ENCODE measurements at regions of chr10 and their contacts with region 1.

Region 1: GRCh38 chr10:114103284-114103683 is 59.6 kb downstream of the ADRB1 start:
- DNase-seq: peak; percentile 90
- H3K4me3 ChIP-seq: no peak overlapping the region
- H3K27ac ChIP-seq: no peak overlapping the region
- H3K4me1 ChIP-seq: peaks cover 26% of the 10 kb centered on the region
- H3K27me3 ChIP-seq: no peaks in the 10 kb centered on the region
- CTCF ChIP-seq: peak; percentile 64

Region 2: DNA sequence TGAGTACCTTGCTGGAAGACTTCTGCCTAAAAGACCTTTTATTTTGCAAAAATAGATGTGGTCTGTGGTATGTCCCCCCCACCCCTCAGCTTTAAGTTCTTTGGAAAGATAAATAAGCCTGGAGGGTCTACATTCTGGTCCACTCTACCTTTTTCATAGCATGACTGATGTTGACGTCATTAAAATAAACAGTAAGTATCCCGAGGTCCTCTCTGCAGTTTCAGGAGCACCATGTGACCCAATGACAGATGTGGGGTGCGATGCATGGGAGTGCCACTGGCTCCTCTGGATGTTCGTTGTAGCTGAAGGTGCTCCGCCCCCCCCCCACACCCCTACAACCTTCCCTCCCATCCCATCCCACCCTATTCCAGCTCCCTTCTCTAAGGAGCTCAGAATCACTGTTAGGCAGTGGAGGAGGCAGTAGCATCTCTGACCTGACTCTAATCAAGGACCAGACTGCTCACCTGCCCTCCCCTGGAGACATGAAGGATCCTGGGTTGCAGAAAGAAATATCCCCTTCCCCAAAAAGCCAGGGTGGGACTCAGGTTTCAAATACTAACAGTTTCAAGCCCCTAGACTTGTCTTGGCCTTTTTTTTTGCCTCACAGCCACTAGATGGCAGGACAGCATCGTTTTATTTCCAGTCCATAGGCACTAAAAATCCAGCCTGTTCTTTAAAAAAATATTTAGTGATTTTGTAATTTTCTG is 398.5 kb before region 1 on chr10:
- CTCF ChIA-PET with region 1: interaction called, 7 read pairs
- POLR2A ChIA-PET with region 1: no interaction called
- intact Hi-C with region 1: loop called (anchors 1 kb)
- DNase-seq: peak; percentile 80
- H3K4me3 ChIP-seq: no peak overlapping the region
- H3K27ac ChIP-seq: peak overlapping the region; percentile 72
- H3K4me1 ChIP-seq: peaks cover 53% of the 10 kb centered on the region
- H3K27me3 ChIP-seq: no peaks in the 10 kb centered on the region
- CTCF ChIP-seq: peak; percentile 83

Region 3: DNA sequence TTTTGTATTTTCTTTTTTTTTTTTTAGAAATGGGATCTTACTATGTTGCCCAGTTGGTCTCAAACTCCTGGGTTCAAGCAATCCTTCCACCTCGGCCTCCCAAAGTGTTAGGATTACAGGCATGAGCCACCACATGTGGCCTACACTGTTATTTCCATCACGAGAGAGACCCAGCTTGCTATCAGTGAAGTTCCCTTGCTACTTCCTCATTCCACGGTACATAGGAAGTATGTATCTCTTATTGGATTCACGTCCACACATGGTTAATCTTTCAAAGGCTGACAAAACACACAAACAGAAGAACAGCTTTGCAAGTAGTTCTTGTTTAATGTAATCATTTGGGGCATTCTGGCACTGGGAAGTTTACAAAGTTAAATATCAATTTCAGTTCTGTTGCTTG is 300.3 kb before region 1 on chr10:
- CTCF ChIA-PET with region 1: interaction called, 15 read pairs
- POLR2A ChIA-PET with region 1: no interaction called
- intact Hi-C with region 1: loop called (anchors 2 kb)
- DNase-seq: no peak
- H3K4me3 ChIP-seq: no peak overlapping the region
- H3K27ac ChIP-seq: no peak overlapping the region
- H3K4me1 ChIP-seq: peaks cover 35% of the 10 kb centered on the region
- H3K27me3 ChIP-seq: no peaks in the 10 kb centered on the region
- CTCF ChIP-seq: no peak

Region 4: DNA sequence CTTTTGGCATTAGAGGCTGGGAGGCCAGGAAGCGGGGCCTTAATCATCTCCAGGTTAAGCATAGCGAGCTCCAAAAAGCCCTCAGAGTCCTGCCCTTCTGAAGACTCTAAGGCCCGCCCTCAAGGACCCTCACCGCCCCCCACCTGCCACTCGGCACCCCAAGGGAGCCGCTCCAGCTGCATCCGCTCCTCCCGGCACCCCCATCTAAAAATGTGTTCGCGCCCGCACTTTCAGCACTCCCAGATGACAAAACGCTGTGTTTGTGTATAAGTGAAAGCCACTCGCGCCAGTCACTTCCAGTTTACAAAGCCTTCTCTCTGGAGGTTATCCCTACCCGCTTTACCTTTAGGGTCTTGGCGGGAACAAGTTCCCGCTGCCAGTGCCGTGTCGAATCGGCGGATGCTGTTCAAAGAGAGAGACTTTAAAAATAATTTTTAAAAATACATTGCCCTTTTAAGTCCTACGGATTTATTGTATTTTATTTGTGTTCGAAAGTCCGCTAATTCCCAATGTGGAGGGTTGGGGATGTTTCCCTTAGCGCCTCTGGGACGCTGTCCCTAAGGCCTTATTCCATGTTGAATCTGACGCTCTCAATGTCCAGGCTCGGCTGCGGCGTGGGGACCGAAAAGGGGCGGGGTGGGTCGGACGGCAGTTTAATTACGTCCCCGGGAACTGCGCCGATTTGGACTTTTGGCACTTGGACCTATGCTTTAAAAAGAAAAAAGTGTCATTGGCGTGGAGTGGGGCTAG is 249.1 kb before region 1 on chr10 and contains the starts of genes DCLRE1A and NHLRC2:
- CTCF ChIA-PET with region 1: no interaction called
- POLR2A ChIA-PET with region 1: interaction called, 3 read pairs
- intact Hi-C with region 1: loop called (anchors 2 kb)
- DNase-seq: peak; percentile 90
- H3K4me3 ChIP-seq: peak within 1 kb of the TSS; percentile 76
- H3K27ac ChIP-seq: peak within 1 kb of the TSS; percentile 99
- H3K4me1 ChIP-seq: peaks cover 27% of the 10 kb centered on the region
- H3K27me3 ChIP-seq: no peaks in the 10 kb centered on the region
- CTCF ChIP-seq: no peak
- total RNA-seq, gene DCLRE1A: 62.4 and 75.6 TPM in 2 replicates
- total RNA-seq, gene NHLRC2: 49.7 and 61.9 TPM in 2 replicates

Region 5: GRCh38 chr10:113987805-113988204 is 115.5 kb before region 1 on chr10:
- CTCF ChIA-PET with region 1: no interaction called
- POLR2A ChIA-PET with region 1: interaction called, 10 read pairs
- intact Hi-C with region 1: loop called (anchors 2 kb)
- DNase-seq: no peak
- H3K4me3 ChIP-seq: no peak overlapping the region
- H3K27ac ChIP-seq: peak overlapping the region; percentile 96
- H3K4me1 ChIP-seq: peaks cover 43% of the 10 kb centered on the region
- H3K27me3 ChIP-seq: no peaks in the 10 kb centered on the region
- CTCF ChIP-seq: no peak

Region 6: GRCh38 chr10:114520453-114520852 is 417.2 kb after region 1 on chr10:
- CTCF ChIA-PET with region 1: no interaction called
- POLR2A ChIA-PET with region 1: no interaction called
- intact Hi-C with region 1: no loop called
- DNase-seq: peak; percentile 16
- H3K4me3 ChIP-seq: no peak overlapping the region
- H3K27ac ChIP-seq: no peak overlapping the region
- H3K4me1 ChIP-seq: peaks cover 14% of the 10 kb centered on the region
- H3K27me3 ChIP-seq: no peaks in the 10 kb centered on the region
- CTCF ChIP-seq: no peak

Measured in A673 (cell line).